Aorta (tissue), 5 donors: ENCODE measurements at regions of chr20 and their contacts with region 1.

Region 1: DNA sequence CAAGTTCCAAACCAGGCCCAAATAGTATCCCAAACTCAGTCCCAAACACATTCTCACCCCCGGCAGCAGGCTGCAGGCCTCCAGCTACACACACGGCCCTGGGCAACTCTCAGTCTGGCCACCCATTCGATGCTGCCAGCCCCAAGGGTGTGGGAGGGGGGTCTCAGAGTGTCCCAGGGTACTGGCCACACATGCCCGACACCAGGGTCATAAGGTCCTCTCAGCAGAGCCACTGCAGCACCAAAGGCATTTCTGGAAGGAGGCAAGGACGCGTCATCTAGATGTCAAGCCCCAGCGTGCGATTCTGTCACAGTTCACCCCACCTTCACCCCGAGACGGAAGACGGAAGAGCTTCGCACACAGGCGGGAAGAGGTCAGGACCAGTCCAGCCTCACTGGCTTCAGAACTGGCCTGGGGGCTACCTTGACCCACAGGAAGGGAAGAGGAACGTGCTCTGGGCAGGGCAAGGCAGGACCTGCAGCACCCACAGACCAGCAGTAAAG is 9.5 kb downstream of the MYL9 start:
- DNase-seq: peak; percentile 50 to 76
- ATAC-seq: peak; percentile 54
- H3K4me3 ChIP-seq: no peak overlapping the region
- H3K27ac ChIP-seq: peak overlapping the region in 1 of 2 donors; percentile 48
- H3K4me1 ChIP-seq: no peaks in the 10 kb centered on the region
- H3K27me3 ChIP-seq: no peaks in the 10 kb centered on the region

Region 2: DNA sequence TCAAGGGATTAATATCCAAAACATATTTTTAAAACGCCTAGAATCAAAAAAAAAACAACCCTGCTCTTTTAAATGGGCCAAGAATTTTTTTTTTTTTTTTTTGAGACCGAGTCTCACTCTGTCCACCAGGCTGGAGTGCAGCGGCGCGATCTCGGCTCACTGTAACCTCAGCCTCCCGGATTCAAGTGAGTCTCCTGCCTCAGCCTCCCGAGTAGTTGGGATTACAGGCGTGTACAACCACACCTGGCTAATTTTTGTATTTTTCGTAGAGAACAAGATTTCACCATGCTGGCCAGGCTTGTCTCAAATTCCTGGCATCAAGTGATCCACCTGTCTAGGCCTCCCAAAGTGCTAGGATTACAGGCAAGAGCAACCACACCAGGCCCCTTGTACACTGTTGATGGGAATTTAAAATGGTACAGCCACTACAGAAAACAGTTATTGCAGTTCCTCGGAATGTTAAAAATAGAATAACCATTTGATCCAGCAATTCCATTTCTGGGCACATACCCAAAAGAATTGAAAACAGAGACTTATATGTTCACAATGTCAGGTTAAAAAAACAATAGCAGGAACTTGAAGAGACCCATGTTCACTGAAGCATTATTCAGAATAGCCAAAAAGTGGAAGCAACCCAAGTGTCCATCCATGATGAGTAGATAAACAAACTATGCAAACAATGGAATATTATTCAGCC is 12.7 kb before region 1 on chr20:
- intact Hi-C with region 1: no loop called
- DNase-seq: peak in 1 of 2 donors; percentile 51
- ATAC-seq: no peak
- H3K4me3 ChIP-seq: no peak overlapping the region
- H3K27ac ChIP-seq: peak overlapping the region; percentile 72 to 87
- H3K4me1 ChIP-seq: no peaks in the 10 kb centered on the region
- H3K27me3 ChIP-seq: no peaks in the 10 kb centered on the region

Region 3: DNA sequence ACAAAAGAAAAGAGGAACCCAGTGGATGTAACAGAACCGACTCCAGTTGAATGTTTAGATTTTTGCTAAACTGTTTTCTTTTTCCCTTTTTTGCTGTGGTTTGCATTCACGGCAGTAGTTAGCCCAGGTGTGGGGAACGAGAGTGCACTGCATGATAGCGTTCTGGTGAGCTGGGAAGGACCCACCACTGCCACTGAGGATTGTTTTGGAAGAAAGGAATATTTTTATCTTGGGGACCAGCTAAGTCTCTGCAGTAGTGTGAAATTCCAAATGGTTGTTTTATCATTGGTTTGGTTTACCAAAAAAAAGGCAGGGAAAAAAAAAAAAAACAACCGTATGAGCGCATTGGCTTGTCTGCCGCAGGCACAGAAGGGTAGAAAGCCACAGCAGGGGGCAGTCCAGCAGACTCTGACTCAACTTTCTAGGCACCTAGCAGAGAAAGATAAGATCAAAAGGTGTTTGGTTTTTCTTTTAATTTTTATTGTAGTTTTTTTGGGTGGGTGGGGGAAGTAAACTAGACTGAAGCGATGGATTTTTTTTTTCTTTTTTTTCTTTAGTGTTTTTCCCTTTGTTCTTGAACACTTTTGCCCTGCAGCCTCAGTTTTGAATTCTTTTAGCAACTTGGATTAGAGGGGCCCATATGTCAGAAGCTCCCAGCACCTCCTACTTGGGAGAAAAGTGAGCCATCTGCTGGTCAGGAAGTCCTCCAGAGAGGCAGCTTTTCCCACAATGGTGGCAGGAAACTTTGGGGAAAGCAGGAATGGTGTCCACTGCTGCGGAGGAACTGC is 41.2 kb after region 1 on chr20:
- intact Hi-C with region 1: loop called (anchors 5 kb)
- DNase-seq: no peak
- ATAC-seq: no peak
- H3K4me3 ChIP-seq: no peak overlapping the region
- H3K27ac ChIP-seq: no peak overlapping the region
- H3K4me1 ChIP-seq: no peaks in the 10 kb centered on the region
- H3K27me3 ChIP-seq: no peaks in the 10 kb centered on the region

Region 4: DNA sequence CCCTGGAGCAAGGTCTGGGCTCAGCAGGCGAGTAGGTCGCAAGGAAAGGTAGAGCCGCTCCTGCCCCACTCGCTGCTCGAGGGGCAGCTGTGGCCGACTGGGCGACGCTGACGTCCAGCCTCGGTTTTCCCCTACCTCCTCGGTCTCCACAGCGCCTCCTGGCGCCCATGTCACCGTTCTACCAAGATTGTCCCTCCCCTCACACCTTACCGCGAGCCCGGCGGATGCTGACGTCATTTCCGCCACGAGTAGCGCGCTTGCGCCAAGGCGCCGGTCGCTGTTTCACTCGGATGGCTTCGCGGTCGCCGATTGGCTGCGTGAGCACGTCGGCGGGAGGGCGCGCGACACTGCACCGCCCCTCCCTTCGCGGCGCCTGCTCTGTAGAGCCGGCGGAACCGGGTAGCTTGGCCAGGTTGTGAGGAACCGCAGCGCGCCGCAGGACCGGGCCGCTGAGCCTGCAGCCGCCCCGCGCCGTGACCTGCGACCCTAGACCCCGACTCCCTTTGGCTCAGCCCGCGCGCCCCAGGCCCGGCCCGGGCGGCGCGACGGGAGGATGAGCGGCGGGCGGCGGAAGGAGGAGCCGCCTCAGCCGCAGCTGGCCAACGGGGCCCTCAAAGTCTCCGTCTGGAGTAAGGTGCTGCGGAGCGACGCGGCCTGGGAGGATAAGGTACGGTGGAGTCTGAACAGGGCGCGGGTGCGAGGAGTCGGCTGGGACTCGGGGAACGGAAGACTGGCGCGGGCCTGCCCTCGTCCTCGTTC is 54.7 kb after region 1 on chr20 and contains the start of gene RAB5IF:
- intact Hi-C with region 1: loop called in 1 of 2 experiments (anchors 2 kb)
- DNase-seq: peak; percentile 100
- ATAC-seq: peak; percentile 99
- H3K4me3 ChIP-seq: peak within 1 kb of the TSS; percentile 57 to 95
- H3K27ac ChIP-seq: peak within 1 kb of the TSS in 1 of 2 donors; percentile 66
- H3K4me1 ChIP-seq: peaks cover 0 to 6% of the 10 kb centered on the region in 2 donors
- H3K27me3 ChIP-seq: no peaks in the 10 kb centered on the region
- total RNA-seq, gene RAB5IF: 39.8 to 48.1 TPM

Region 5: DNA sequence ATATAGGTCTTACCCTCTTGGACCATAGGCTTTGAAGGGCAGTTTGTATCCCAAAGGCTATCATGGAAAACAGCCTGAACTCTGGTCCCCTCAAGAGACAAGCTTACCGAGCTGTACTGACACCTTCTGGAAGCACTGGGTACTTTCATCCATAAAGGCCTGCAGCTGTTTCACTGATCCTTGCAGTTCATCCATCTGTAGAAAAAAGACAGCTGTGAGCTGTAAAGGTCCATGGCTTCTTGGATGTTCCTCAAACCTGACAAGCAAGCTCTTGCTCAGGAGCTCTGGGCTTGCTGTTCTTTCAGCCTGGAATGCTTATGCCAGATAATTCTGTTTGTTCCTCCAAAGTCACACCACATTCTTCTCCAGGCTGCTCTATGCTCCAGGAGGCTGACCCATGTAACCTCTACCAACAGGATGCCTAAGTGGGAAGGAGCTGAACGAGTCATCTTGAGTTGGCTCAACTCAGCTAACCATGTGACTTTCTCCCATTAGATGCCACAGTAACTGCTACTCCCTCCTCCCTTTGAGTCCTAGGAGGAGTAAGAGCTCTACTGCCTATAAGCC is 203.9 kb after region 1 on chr20:
- intact Hi-C with region 1: loop called (anchors 5 kb)
- DNase-seq: no peak
- ATAC-seq: peak; percentile 85
- H3K4me3 ChIP-seq: no peak overlapping the region
- H3K27ac ChIP-seq: no peak overlapping the region
- H3K4me1 ChIP-seq: no peaks in the 10 kb centered on the region
- H3K27me3 ChIP-seq: no peaks in the 10 kb centered on the region

Region 6: GRCh38 chr20:36886859-36887751 is 336.3 kb after region 1 on chr20:
- intact Hi-C with region 1: loop called in 1 of 2 experiments (anchors 5 kb)
- DNase-seq: peak; percentile 88 to 95
- ATAC-seq: peak; percentile 90
- H3K4me3 ChIP-seq: no peak overlapping the region
- H3K27ac ChIP-seq: no peak overlapping the region
- H3K4me1 ChIP-seq: no peaks in the 10 kb centered on the region
- H3K27me3 ChIP-seq: no peaks in the 10 kb centered on the region